Gastrocnemius medialis (tissue), 4 donors: ENCODE measurements at regions of chr9 and their contacts with region 1.

Region 1: GRCh38 chr9:72807765-72808445 is 144.9 kb downstream of the ALDH1A1 start:
- DNase-seq: no peak
- ATAC-seq: no peak
- H3K4me3 ChIP-seq: no peak overlapping the region
- H3K27ac ChIP-seq: no peak overlapping the region
- H3K4me1 ChIP-seq: no peaks in the 10 kb centered on the region
- H3K27me3 ChIP-seq: no peaks in the 10 kb centered on the region
- CTCF ChIP-seq: no peak
- POLR2A ChIP-seq: no peak

Region 2: DNA sequence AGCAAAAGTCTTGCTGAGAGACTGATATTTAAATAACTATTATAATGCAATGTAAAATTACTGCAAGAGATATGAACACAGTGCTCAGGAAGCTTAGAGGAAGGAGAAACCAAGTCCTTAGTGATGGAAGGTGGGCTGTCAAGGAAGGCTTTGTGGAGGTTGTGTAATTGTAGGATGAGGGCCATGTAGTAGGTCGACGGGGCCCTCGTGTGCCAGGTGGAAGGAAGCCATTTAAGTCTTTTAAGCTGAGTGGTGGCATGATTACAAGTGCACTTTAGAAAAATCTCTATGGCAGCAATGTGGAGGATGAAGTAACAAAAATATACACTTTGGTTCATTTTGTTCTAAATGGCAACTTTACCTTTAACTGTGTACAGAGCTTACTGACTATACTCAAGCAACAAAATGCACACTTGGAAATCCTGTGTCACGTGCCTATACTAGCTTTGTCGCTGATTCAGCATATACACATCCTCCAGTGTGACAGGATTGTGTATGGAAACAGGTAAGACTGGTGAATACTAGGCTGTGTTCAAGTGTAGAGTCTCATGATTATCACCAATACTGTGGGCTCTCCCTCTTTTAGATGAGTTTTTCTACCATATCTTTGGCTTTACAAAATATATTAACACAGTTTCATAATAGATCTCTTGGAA is 207.9 kb before region 1 on chr9:
- in situ Hi-C with region 1: loop called in 1 of 4 experiments (anchors 25 kb)
- intact Hi-C with region 1: no loop called
- DNase-seq: no peak
- ATAC-seq: no peak
- H3K4me3 ChIP-seq: no peak overlapping the region
- H3K27ac ChIP-seq: no peak overlapping the region
- H3K4me1 ChIP-seq: no peaks in the 10 kb centered on the region
- H3K27me3 ChIP-seq: no peaks in the 10 kb centered on the region
- CTCF ChIP-seq: no peak
- POLR2A ChIP-seq: no peak

Region 3: DNA sequence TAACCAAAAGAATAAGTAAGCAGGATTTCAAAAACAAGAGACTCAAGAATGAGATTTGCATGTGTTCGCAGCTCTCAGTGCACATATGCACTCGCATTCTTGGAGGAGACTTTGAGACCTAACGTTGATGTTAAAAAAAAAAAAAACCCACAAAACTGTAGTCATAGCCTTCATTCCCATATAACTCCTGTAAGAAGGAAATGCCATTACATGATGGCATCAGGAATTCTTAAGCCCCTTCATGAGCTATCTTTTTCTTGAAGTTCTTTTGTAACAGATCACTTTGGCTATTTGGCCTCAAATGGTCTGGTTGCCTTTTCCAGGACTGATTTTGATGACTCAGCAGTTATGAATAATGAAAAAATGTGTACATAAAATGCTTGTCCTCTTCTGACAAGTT is 31.2 kb after region 1 on chr9:
- in situ Hi-C with region 1: no loop called
- intact Hi-C with region 1: no loop called
- DNase-seq: no peak
- ATAC-seq: no peak
- H3K4me3 ChIP-seq: no peak overlapping the region
- H3K27ac ChIP-seq: no peak overlapping the region
- H3K4me1 ChIP-seq: no peaks in the 10 kb centered on the region
- H3K27me3 ChIP-seq: no peaks in the 10 kb centered on the region
- CTCF ChIP-seq: no peak
- POLR2A ChIP-seq: no peak

Region 4: DNA sequence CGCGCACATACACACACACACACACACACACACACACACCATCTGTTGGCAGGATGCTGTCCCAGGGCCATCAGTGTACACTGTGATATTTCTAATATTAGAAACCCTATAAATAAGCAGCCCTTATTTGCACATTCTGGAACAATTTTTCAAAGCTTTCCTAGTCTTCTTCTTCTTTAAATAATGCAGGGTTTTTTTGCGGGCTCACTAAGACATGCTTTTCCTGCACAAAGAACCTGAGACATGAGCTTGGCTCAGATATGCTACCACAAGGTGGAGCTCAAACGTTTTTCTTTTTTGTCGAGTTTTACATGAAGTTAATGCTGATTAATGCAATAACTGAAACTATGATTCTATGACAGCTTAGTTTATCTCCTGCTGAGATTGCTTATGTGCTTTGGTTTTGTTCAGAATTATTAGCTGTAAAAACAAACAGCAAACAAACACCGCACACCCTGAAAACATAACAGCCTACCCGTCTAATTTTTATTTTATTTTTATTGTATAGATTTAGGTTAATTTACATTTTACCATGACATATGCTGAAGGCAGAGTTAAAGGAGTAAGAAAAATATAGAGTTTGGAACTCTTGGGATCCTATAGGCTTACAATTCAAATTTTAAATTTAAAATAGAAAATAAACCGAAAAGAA is 49.2 kb after region 1 on chr9:
- in situ Hi-C with region 1: no loop called
- intact Hi-C with region 1: no loop called
- DNase-seq: no peak
- ATAC-seq: peak; percentile 64 to 77
- H3K4me3 ChIP-seq: no peak overlapping the region
- H3K27ac ChIP-seq: peak overlapping the region in 2 of 4 donors; percentile 16 to 17
- H3K4me1 ChIP-seq: peaks cover 15 to 18% of the 10 kb centered on the region in 2 donors
- H3K27me3 ChIP-seq: no peaks in the 10 kb centered on the region
- CTCF ChIP-seq: peak; percentile 19 to 66 (median 47)
- POLR2A ChIP-seq: no peak